Mammary epithelial cell (primary cell): ENCODE measurements at regions of chr6 and their contacts with region 1.

Region 1: GRCh38 chr6:147285087-147285855 is 81.1 kb downstream of the STXBP5 start:
- DNase-seq: peak; percentile 22
- H3K4me3 ChIP-seq: no peak overlapping the region
- H3K27ac ChIP-seq: no peak overlapping the region
- H3K4me1 ChIP-seq: peaks cover 13% of the 10 kb centered on the region
- H3K27me3 ChIP-seq: no peaks in the 10 kb centered on the region
- CTCF ChIP-seq: peak; percentile 35 to 50

Region 2: DNA sequence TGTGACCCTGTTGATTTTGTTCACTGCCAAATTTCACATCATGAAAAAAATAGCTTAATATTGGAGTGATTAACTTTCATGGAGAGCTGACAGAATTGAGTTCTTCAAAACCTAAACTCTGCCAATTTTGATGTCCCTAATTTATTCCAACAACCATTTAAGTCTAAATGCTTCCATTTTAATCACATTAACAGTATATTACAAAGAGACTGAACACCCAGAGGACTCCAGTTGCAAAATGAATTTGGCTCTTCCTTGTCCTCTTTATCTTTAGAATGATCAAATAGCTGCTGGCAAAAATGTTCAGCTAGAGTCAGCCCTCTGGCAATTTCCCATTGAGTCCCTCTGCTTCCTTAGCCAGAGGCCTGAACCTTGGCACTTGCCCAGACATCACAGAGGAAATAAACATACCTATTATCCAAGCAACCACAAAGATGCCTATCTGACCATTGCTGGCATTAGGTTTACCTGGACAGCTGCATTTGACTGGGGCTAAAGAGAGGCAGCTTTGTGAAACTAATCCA is 380.0 kb before region 1 on chr6:
- CTCF ChIA-PET with region 1: no interaction called
- dilution Hi-C with region 1: no loop called
- in situ Hi-C with region 1: no loop called
- intact Hi-C with region 1: loop called (anchors 1 kb)
- DNase-seq: peak; percentile 86
- H3K4me3 ChIP-seq: no peak overlapping the region
- H3K27ac ChIP-seq: no peak overlapping the region
- H3K4me1 ChIP-seq: peaks cover 10% of the 10 kb centered on the region
- H3K27me3 ChIP-seq: no peaks in the 10 kb centered on the region
- CTCF ChIP-seq: no peak

Region 3: GRCh38 chr6:146968041-146968760 is 317.1 kb before region 1 on chr6:
- CTCF ChIA-PET with region 1: no interaction called
- dilution Hi-C with region 1: no loop called
- in situ Hi-C with region 1: no loop called
- intact Hi-C with region 1: loop called (anchors 5 kb)
- DNase-seq: peak; percentile 65
- H3K4me3 ChIP-seq: no peak overlapping the region
- H3K27ac ChIP-seq: no peak overlapping the region
- H3K4me1 ChIP-seq: peaks cover 7% of the 10 kb centered on the region
- H3K27me3 ChIP-seq: no peaks in the 10 kb centered on the region
- CTCF ChIP-seq: no peak

Region 4: GRCh38 chr6:147081140-147081539 is 204.1 kb before region 1 on chr6:
- CTCF ChIA-PET with region 1: no interaction called
- dilution Hi-C with region 1: no loop called
- in situ Hi-C with region 1: no loop called
- intact Hi-C with region 1: loop called (anchors 10 kb)
- DNase-seq: peak; percentile 85
- H3K4me3 ChIP-seq: no peak overlapping the region
- H3K27ac ChIP-seq: no peak overlapping the region
- H3K4me1 ChIP-seq: peaks cover 14% of the 10 kb centered on the region
- H3K27me3 ChIP-seq: no peaks in the 10 kb centered on the region
- CTCF ChIP-seq: no peak